ENCODE measurements at regions of chr6 and their contacts with region 1.

Region 1: DNA sequence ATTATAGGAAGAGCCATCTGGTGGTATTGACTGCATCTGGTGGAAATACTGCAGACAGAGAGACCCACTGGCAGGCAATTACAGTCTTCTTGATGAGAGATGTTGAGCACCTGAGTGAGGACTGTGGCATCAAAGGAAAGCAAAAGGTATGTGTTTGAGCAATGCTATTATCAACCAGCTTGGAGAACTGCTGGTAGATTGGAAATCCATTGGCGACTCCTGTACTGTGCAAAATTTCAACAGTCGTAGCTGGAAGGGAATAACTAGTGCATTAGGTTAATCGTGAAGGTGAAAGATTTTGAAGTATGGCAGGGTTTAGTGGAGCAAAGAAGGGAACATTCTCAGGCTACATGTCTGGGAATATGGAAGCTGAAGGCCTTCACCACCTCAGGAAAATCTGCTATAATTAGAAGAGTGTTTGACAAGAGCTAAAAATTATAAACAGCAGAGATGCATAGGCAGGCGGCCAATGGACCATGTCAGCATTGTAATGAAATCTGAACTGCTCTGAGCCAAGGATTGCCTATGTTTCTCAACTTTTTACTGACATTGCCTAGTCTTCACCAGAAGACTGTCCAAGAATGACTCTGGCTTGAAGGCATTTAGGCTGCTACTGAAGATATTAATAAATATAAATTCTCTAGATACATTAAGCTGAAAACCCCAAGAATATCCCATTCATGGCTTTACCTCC is 84.3 kb downstream of the C6orf52 start:
- DNase-seq: peak; percentile 73
- ATAC-seq: peak; percentile 91

Region 2: GRCh38 chr6:10510592-10511367 is 99.4 kb before region 1 on chr6:
- intact Hi-C with region 1: loop called (anchors 5 kb)
- DNase-seq: peak; percentile 72
- ATAC-seq: peak; percentile 94

Region 3: DNA sequence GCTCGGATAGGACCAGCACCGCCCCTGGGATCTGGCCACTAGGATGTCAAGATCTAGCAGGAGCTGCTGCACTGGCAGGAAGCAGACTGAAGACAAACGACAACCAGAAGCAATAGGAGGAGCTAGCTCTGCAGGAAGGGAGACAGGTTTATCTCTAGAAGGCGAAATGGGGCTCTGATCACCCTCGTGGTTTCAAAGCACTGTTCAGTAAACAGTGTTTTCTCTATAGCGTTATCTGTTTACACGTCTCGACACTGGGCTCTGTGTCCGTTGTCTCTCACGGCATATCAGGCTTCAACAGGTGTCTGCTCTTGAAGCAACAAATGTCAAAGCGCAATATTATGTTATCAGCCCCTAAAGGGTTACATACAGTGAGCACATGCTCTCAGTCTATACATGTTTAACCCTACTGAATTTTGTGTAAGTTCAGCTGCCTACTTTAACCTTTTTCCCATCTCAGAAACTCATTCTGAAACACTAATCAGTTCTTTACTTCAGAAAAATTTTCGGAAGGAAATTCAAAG is 161.3 kb after region 1 on chr6:
- intact Hi-C with region 1: no loop called
- DNase-seq: no peak
- ATAC-seq: no peak